CD4-positive, alpha-beta T cell (primary cell): ENCODE measurements at regions of chr16 and their contacts with region 1.

Region 1: GRCh38 chr16:24516900-24517669 is 22.3 kb upstream of the RBBP6 start:
- DNase-seq: peak; percentile 57 to 86 (median 68)
- ATAC-seq: peak; percentile 92
- H3K4me3 ChIP-seq: no peak overlapping the region
- H3K4me3 Mint-ChIP-seq: no peak overlapping the region
- H3K27ac ChIP-seq: no peak overlapping the region
- H3K27ac Mint-ChIP-seq: no peak overlapping the region
- H3K4me1 ChIP-seq: peaks cover 8% of the 10 kb centered on the region
- H3K4me1 Mint-ChIP-seq: peaks cover 6% of the 10 kb centered on the region
- H3K27me3 ChIP-seq: no peaks in the 10 kb centered on the region
- H3K27me3 Mint-ChIP-seq: peaks cover 4% of the 10 kb centered on the region
- CTCF ChIP-seq: peak; percentile 96

Region 2: GRCh38 chr16:24921229-24921628 is 404.1 kb after region 1 on chr16:
- CTCF ChIA-PET with region 1: no interaction called
- POLR2A ChIA-PET with region 1: no interaction called
- intact Hi-C with region 1: loop called in 1 of 2 experiments (anchors 10 kb)
- DNase-seq: peak in 1 of 14 experiments; percentile 37
- ATAC-seq: no peak
- H3K4me3 ChIP-seq: no peak overlapping the region
- H3K4me3 Mint-ChIP-seq: no peak overlapping the region
- H3K27ac ChIP-seq: no peak overlapping the region
- H3K27ac Mint-ChIP-seq: peak overlapping the region; percentile 13
- H3K4me1 ChIP-seq: no peaks in the 10 kb centered on the region
- H3K4me1 Mint-ChIP-seq: peaks cover 7% of the 10 kb centered on the region
- H3K27me3 ChIP-seq: no peaks in the 10 kb centered on the region
- H3K27me3 Mint-ChIP-seq: no peaks in the 10 kb centered on the region
- CTCF ChIP-seq: no peak